CD8-positive, alpha-beta T cell (primary cell): ENCODE measurements at regions of chr1 and their contacts with region 1.

Region 1: DNA sequence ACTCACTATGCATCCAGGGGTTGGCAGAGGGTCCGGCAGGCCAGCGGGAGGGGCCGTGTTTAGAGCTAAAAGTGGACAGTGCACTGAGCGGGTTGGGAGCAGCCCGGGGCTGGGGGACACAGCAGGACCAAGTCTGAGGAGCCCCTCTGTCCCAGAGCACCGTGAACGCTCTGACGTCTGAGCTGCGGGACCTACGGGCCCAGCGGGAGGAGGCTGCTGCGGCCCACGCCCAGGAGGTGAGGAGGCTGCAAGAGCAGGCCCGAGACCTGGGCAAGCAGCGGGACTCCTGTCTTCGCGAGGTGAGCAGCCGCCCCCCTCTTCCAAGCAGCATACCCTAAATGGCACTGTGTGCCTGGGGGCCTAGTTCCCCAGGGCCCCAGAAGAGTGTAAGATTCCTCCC is 25.8 kb downstream of the MFAP2 start:
- DNase-seq: no peak
- ATAC-seq: no peak
- H3K4me3 ChIP-seq: no peak overlapping the region
- H3K4me3 Mint-ChIP-seq: no peak overlapping the region
- H3K27ac ChIP-seq: no peak overlapping the region
- H3K27ac Mint-ChIP-seq: no peak overlapping the region
- H3K4me1 ChIP-seq: no peaks in the 10 kb centered on the region
- H3K4me1 Mint-ChIP-seq: no peaks in the 10 kb centered on the region
- H3K27me3 ChIP-seq: no peaks in the 10 kb centered on the region
- H3K27me3 Mint-ChIP-seq: no peaks in the 10 kb centered on the region
- CTCF ChIP-seq: no peak

Region 2: DNA sequence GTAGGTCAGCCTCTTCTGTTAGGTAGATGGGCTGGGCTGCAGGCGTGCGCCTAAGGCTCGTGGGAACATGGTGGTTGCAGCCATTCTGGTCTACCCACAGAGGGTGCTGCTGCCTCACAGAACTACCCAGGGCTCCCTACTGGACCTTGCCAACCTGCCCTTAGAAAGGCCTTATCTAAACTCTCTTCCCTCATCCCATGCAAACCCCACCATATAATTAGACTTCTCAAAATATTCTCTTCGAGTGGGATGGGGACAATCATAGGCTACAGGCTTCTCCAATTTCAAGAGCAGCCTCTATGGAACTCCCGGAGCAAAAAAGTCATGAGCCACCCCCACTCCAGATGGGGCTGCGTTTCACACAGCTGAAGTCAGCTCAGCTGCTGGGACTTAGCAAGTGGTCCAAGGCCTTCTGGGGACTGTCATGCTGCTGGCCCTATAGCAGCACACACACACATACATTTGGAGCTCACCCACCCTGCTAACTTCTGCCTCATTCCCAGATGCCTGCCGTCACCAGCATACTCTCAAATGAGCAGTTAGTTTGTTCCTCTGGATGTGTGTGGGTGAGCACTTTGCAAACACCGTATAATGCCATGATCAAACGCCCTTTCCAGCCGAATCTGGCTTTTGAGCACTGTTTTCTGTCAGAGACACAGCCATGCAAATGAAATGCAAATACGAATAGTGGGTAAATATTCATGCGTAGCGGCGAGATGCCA is 105.3 kb after region 1 on chr1:
- CTCF ChIA-PET with region 1: no interaction called
- POLR2A ChIA-PET with region 1: no interaction called
- intact Hi-C with region 1: no loop called
- DNase-seq: peak in 4 of 9 experiments; percentile 15 to 52 (median 37)
- ATAC-seq: peak; percentile 56
- H3K4me3 ChIP-seq: no peak overlapping the region
- H3K4me3 Mint-ChIP-seq: no peak overlapping the region
- H3K27ac ChIP-seq: no peak overlapping the region
- H3K27ac Mint-ChIP-seq: no peak overlapping the region
- H3K4me1 ChIP-seq: no peaks in the 10 kb centered on the region
- H3K4me1 Mint-ChIP-seq: peaks cover 2% of the 10 kb centered on the region
- H3K27me3 ChIP-seq: no peaks in the 10 kb centered on the region
- H3K27me3 Mint-ChIP-seq: peaks cover 6% of the 10 kb centered on the region
- CTCF ChIP-seq: no peak

Region 3: DNA sequence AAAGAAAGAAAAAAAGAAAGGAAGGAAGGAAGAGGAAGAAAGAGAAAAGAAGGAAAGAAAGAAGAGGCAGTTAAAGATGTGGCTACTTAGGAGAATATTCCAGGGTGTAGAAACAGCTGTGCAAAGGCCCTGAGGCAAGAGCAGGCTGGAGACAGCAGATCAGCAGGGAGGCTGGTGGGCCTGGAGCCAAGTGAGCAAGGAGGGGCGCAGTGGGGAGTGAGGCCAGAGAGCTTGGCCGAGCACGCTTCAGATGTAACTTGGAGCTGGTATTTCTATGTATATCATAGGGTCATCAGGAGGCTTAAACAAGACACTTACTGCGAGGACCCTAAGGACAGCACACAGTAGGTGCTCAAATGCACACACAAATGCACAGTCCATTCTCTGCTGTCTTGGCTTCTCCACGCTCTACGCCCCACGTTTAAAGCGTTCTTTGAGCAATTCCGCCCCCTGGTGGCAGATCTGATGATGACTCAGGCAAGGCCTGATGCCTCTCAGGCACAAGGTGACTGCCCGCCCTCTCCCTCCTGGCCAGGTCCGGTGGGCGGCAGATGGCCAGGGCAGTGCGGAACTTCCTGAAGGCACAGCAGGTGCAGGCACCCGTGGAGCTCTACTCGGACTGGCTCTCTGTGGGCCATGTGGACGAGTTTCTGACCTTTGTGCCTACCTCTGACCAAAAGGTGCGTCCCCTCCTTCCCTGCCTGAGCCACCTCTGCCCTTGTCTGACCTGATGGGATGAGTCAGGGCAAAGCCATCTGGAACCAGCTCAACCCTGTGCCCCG is 282.4 kb after region 1 on chr1:
- CTCF ChIA-PET with region 1: interaction called, 3 read pairs
- POLR2A ChIA-PET with region 1: no interaction called
- intact Hi-C with region 1: loop called in 1 of 2 experiments (anchors 5 kb)
- DNase-seq: peak; percentile 77 to 93 (median 83)
- ATAC-seq: peak; percentile 74
- H3K4me3 ChIP-seq: no peak overlapping the region
- H3K4me3 Mint-ChIP-seq: no peak overlapping the region
- H3K27ac ChIP-seq: no peak overlapping the region
- H3K27ac Mint-ChIP-seq: no peak overlapping the region
- H3K4me1 ChIP-seq: no peaks in the 10 kb centered on the region
- H3K4me1 Mint-ChIP-seq: peaks cover 4% of the 10 kb centered on the region
- H3K27me3 ChIP-seq: no peaks in the 10 kb centered on the region
- H3K27me3 Mint-ChIP-seq: peaks cover 9% of the 10 kb centered on the region
- CTCF ChIP-seq: peak; percentile 80